ENCODE measurements at regions of chr6 and their contacts with region 1.

Region 1: GRCh38 chr6:133756078-133756695 is 132.7 kb upstream of the TCF21 start:
- DNase-seq: no peak

Region 2: GRCh38 chr6:133707456-133707855 is 48.7 kb before region 1 on chr6:
- intact Hi-C with region 1: loop called (anchors 10 kb)
- DNase-seq: no peak